Left lung (tissue), 14 donors: ENCODE measurements at regions of chr15 and their contacts with region 1.

Region 1: DNA sequence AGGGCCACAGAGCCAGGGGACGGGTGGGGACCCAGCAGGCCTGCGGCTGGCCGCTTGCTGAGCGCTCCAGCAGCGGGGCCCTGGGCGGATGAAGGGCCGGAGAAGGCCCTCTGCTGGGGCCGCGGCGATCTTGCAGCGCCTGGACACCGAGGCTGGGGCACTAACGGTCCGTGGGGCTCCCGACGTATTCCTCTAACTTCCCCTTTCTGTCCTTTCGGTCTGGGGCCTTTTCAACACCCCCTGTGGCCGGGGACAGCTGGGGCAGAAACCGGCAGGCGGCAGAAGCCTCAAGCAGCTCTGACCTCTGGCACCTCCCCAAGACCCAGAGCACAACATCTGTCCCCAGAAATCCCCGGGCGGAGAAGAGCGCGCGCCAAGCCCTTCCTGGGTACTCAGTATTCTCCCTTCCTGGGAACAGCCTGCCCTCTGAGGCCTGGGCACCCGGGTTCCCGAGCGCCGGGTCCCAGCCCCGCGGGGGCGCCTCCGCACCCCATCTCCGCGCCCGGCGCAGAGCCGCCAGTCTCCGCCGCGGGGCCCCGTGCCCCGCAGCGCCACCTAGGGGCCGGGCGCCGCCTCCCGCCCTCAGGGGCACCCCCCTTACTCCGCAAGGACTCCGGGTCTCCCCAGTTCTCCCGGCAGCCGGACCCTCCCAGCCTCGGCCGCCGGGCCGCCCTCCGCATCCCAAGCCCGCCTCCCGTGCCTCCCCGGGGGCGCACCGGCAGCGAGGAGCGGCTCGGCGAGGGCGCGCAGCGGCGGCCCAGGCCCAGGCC is 582 bp upstream of the SLCO3A1 start:
- DNase-seq: peak; percentile 61 to 98 (median 82)
- ATAC-seq: peak; percentile 83
- H3K4me3 ChIP-seq: peak overlapping the region; percentile 66 to 81
- H3K27ac ChIP-seq: peak overlapping the region; percentile 91 to 98
- H3K4me1 ChIP-seq: peaks cover 35 to 52% of the 10 kb centered on the region in 2 donors
- H3K27me3 ChIP-seq: no peaks in the 10 kb centered on the region
- CTCF ChIP-seq: peak; percentile 70 to 84

Region 2: DNA sequence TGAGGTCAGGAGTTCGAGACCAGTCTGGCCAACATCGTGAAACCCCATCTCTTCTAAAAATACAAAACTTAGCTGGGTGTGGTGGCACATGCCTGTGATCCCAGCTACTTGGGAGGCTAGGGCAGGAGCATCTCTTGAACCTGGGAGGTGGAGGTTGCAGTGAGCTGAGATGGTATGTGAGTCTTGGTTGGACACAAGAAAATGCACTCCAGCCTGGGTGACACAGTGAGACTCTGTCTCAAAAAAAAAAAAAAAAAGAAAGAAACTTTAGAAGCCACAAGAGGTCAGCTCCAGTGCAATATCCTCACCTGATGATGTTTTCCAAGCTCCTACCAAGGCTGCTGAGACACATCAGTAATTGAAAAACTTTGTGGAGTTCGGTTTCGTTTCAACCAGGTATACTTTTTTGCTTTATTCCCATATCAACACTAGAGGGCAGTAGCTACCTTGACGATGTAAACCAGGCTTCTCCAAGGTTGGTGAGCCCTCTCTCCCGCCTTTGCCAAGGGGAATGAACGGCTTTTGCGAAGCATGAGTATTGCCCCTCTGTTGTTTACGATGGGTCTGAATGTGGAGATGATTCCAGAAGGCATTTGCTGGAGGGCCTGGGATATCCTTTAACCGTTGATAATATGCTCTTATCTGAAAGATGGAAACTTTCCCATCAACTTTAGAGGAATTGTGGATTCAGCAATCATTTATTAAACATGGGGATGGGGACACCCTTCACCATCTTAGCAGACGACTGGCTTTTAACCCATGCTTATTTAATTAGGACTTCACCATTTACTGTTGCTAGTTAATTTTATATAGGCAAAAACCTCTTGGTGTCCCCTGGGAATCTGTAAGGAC is 550.1 kb before region 1 on chr15:
- intact Hi-C with region 1: loop called in 1 of 2 experiments (anchors 5 kb)
- DNase-seq: peak in 2 of 4 donors; percentile 56 to 75
- ATAC-seq: peak; percentile 97
- H3K4me3 ChIP-seq: no peak overlapping the region
- H3K27ac ChIP-seq: no peak overlapping the region
- H3K4me1 ChIP-seq: peaks cover 0 to 5% of the 10 kb centered on the region in 2 donors
- H3K27me3 ChIP-seq: peaks cover 10 to 40% of the 10 kb centered on the region in 2 donors
- CTCF ChIP-seq: peak; percentile 66 to 67

Region 3: GRCh38 chr15:91679429-91679828 is 173.5 kb before region 1 on chr15:
- intact Hi-C with region 1: no loop called
- DNase-seq: no peak
- ATAC-seq: no peak
- H3K4me3 ChIP-seq: no peak overlapping the region
- H3K27ac ChIP-seq: no peak overlapping the region
- H3K4me1 ChIP-seq: no peaks in the 10 kb centered on the region
- H3K27me3 ChIP-seq: no peaks in the 10 kb centered on the region
- CTCF ChIP-seq: no peak

Region 4: GRCh38 chr15:91706322-91707032 is 146.4 kb before region 1 on chr15:
- intact Hi-C with region 1: loop called in 1 of 2 experiments (anchors 10 kb)
- DNase-seq: peak; percentile 69 to 82 (median 80)
- ATAC-seq: peak; percentile 96
- H3K4me3 ChIP-seq: no peak overlapping the region
- H3K27ac ChIP-seq: peak overlapping the region; percentile 35 to 37
- H3K4me1 ChIP-seq: peaks cover 0 to 7% of the 10 kb centered on the region in 2 donors
- H3K27me3 ChIP-seq: no peaks in the 10 kb centered on the region
- CTCF ChIP-seq: peak; percentile 78 to 92

Region 5: GRCh38 chr15:91926908-91927270 is 74.0 kb after region 1 on chr15:
- intact Hi-C with region 1: no loop called
- DNase-seq: no peak
- ATAC-seq: peak; percentile 66
- H3K4me3 ChIP-seq: no peak overlapping the region
- H3K27ac ChIP-seq: peak overlapping the region; percentile 1 to 69
- H3K4me1 ChIP-seq: peaks cover 9 to 38% of the 10 kb centered on the region in 2 donors
- H3K27me3 ChIP-seq: no peaks in the 10 kb centered on the region
- CTCF ChIP-seq: no peak